B cell (primary cell): ENCODE measurements at regions of chr11 and their contacts with region 1.

Region 1: DNA sequence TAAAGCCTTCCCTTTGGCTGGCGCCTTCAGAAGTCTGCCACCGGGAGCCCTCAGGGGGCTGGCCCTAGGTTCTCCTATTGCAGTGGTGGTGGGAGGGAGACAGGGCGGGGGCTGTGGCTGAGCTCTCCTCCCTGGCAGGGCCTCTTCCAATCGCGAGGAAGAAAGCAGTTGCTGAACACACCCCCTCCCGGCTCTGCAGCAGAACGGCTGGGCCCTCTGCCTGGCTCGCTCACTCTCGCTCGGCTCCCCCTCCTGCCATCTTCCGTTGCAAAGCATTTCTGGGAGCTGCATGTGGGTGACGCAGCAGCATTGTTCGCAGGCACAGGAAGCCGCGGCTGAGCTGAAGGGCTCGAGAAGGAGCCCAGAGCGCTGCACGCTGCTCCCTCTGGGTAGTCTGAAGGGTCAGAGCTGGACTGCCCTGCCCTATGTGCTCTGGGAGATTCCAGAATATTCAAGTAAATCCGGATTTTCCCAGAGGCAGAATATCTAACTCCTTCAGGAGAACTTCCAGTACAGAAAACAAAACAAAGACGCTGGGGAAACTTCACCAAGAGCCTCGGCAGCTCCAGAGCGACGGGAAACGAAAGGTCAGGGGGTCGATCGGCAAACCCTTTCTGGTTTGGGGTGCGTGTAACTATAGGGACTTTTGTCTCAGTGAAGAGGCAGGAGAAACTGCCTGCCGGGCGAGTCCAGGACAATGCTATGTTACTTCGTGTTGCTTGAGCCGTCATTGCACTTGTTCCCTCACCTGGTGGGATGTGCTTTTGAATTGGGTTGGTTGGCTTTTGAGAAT is 26.3 kb upstream of the GRK2 start:
- DNase-seq: peak; percentile 96
- ATAC-seq: peak; percentile 94
- H3K4me3 ChIP-seq: peak overlapping the region; percentile 71 to 99 (median 82)
- H3K4me3 Mint-ChIP-seq: peak overlapping the region; percentile 96
- H3K27ac ChIP-seq: peak overlapping the region; percentile 86 to 91
- H3K27ac Mint-ChIP-seq: peak overlapping the region; percentile 99
- H3K4me1 ChIP-seq: peaks cover 26 to 34% of the 10 kb centered on the region in 2 donors
- H3K4me1 Mint-ChIP-seq: peaks cover 43% of the 10 kb centered on the region
- H3K27me3 ChIP-seq: no peaks in the 10 kb centered on the region
- H3K27me3 Mint-ChIP-seq: no peaks in the 10 kb centered on the region
- CTCF ChIP-seq: no peak

Region 2: GRCh38 chr11:67118801-67119584 is 121.0 kb before region 1 on chr11 and contains the start of gene KDM2A:
- CTCF ChIA-PET with region 1: interaction called, 4 read pairs
- POLR2A ChIA-PET with region 1: interaction called, 5 read pairs
- intact Hi-C with region 1: loop called (anchors 2 kb)
- DNase-seq: peak; percentile 100
- ATAC-seq: peak; percentile 77
- H3K4me3 ChIP-seq: peak within 1 kb of the TSS; percentile 73 to 96 (median 89)
- H3K4me3 Mint-ChIP-seq: peak within 1 kb of the TSS; percentile 95
- H3K27ac ChIP-seq: peak within 1 kb of the TSS; percentile 79 to 81
- H3K27ac Mint-ChIP-seq: peak within 1 kb of the TSS; percentile 89
- H3K4me1 ChIP-seq: peaks cover 13 to 36% of the 10 kb centered on the region in 2 donors
- H3K4me1 Mint-ChIP-seq: peaks cover 38% of the 10 kb centered on the region
- H3K27me3 ChIP-seq: no peaks in the 10 kb centered on the region
- H3K27me3 Mint-ChIP-seq: no peaks in the 10 kb centered on the region
- CTCF ChIP-seq: peak; percentile 41
- total RNA-seq, gene KDM2A: 229 and 243 TPM in 2 replicates

Region 3: GRCh38 chr11:67178878-67179277 is 61.1 kb before region 1 on chr11:
- CTCF ChIA-PET with region 1: no interaction called
- POLR2A ChIA-PET with region 1: no interaction called
- intact Hi-C with region 1: no loop called
- DNase-seq: no peak
- ATAC-seq: no peak
- H3K4me3 ChIP-seq: no peak overlapping the region
- H3K4me3 Mint-ChIP-seq: no peak overlapping the region
- H3K27ac ChIP-seq: no peak overlapping the region
- H3K27ac Mint-ChIP-seq: no peak overlapping the region
- H3K4me1 ChIP-seq: no peaks in the 10 kb centered on the region
- H3K4me1 Mint-ChIP-seq: peaks cover 14% of the 10 kb centered on the region
- H3K27me3 ChIP-seq: no peaks in the 10 kb centered on the region
- H3K27me3 Mint-ChIP-seq: no peaks in the 10 kb centered on the region
- CTCF ChIP-seq: no peak

Region 4: DNA sequence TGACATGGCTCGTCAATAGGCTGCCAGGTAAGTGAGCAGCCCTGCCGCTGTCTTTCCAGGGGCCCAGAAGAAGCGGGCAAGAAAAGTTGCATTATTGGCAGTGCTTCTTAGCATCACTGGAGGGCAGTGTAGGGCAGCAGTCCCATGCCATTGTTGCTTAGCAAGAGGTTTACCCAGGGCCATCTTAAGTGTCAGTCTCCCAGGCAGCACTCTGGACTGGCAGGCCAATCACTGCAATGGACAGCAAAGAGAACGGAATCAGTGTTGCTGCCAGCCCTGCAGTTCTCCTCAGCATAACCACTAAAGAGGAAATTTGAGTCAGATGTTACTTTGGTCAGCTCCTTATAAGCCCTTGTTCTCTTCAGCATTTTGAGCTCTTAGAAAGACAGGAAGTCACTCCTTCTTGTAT is 12.9 kb after region 1 on chr11:
- CTCF ChIA-PET with region 1: interaction called, 9 read pairs
- POLR2A ChIA-PET with region 1: interaction called, 4 read pairs
- intact Hi-C with region 1: loop called (anchors 1 kb)
- DNase-seq: peak; percentile 55
- ATAC-seq: peak; percentile 41
- H3K4me3 ChIP-seq: no peak overlapping the region
- H3K4me3 Mint-ChIP-seq: no peak overlapping the region
- H3K27ac ChIP-seq: no peak overlapping the region
- H3K27ac Mint-ChIP-seq: peak overlapping the region; percentile 67
- H3K4me1 ChIP-seq: no peaks in the 10 kb centered on the region
- H3K4me1 Mint-ChIP-seq: peaks cover 7% of the 10 kb centered on the region
- H3K27me3 ChIP-seq: no peaks in the 10 kb centered on the region
- H3K27me3 Mint-ChIP-seq: no peaks in the 10 kb centered on the region
- CTCF ChIP-seq: peak; percentile 57

Region 5: DNA sequence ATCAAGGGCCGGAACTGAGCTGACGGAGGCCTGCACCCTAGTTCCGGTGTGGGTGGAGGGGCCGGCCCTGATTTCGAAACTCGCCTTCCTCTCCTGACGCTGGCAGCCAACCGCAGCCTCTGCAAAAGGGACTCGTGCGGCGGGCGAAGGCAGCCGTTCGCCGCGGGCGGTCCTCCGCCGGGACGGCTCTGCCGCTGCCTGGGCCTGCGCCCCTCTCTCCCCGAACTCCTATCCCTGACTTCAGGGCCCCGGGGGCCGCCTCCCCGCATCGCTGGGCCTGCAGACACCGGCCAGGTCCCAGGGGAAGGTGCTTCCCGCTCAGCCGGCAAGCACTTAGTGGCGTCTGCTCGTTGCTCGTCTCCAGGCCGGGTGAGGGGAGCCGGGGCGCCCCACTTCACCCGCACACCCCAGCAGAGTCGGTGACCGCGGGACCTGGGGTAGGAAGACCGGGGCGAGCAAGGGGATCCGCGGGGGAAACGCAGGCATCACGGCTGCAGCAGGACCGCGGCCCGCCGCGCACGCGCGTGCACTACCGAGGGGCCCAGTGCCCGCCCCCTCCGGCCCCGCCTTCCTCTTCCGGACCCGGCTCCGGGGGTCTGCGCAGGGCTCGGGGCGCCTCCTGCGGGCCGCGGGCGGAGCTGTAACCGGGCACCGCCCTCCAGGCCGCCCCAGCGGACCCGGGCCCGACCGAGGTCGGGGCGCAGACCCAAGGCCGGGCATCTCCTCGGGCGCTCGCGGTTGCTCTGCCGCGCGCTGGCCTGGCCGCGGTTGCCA is 48.7 kb after region 1 on chr11:
- CTCF ChIA-PET with region 1: interaction called, 7 read pairs
- POLR2A ChIA-PET with region 1: interaction called, 13 read pairs
- intact Hi-C with region 1: loop called (anchors 1 kb)
- DNase-seq: peak; percentile 95
- ATAC-seq: peak; percentile 76
- H3K4me3 ChIP-seq: peak overlapping the region; percentile 31 to 86 (median 79)
- H3K4me3 Mint-ChIP-seq: peak overlapping the region; percentile 76
- H3K27ac ChIP-seq: peak overlapping the region; percentile 86 to 92
- H3K27ac Mint-ChIP-seq: peak overlapping the region; percentile 97
- H3K4me1 ChIP-seq: peaks cover 44 to 55% of the 10 kb centered on the region in 2 donors
- H3K4me1 Mint-ChIP-seq: peaks cover 45% of the 10 kb centered on the region
- H3K27me3 ChIP-seq: no peaks in the 10 kb centered on the region
- H3K27me3 Mint-ChIP-seq: no peaks in the 10 kb centered on the region
- CTCF ChIP-seq: peak; percentile 61

Region 6: GRCh38 chr11:67382276-67383136 is 142.5 kb after region 1 on chr11:
- CTCF ChIA-PET with region 1: interaction called, 4 read pairs
- POLR2A ChIA-PET with region 1: interaction called, 10 read pairs
- intact Hi-C with region 1: loop called (anchors 5 kb)
- DNase-seq: peak; percentile 88
- ATAC-seq: peak; percentile 86
- H3K4me3 ChIP-seq: no peak overlapping the region
- H3K4me3 Mint-ChIP-seq: peak overlapping the region; percentile 84
- H3K27ac ChIP-seq: peak overlapping the region in 1 of 2 donors; percentile 88
- H3K27ac Mint-ChIP-seq: peak overlapping the region; percentile 92
- H3K4me1 ChIP-seq: peaks cover 22 to 33% of the 10 kb centered on the region in 2 donors
- H3K4me1 Mint-ChIP-seq: peaks cover 22% of the 10 kb centered on the region
- H3K27me3 ChIP-seq: no peaks in the 10 kb centered on the region
- H3K27me3 Mint-ChIP-seq: no peaks in the 10 kb centered on the region
- CTCF ChIP-seq: peak; percentile 96